ENCODE measurements at regions of chr7 and their contacts with region 1.

Region 1: DNA sequence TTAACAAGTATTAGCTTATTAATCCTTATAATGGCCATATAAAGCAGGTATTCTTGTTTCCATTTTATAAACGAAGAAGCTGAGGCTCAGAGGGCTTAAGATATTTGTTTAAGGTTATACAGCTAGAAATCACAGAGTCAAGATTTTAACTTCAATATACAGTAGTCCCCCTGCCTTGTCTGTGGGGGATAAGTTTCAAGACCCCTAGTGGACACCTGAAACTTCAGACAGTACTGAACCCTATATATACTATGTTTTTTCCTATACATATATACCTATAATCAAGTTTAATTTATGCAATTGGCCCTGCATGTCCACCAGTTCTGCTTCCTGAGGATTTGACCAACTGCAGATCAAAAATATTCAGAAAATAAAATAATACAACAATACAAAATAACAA is 44.4 kb upstream of the STRIP2 start:
- DNase-seq: no peak
- H3K4me3 ChIP-seq: no peak overlapping the region
- H3K27ac ChIP-seq: no peak overlapping the region
- H3K4me1 ChIP-seq: no peaks in the 10 kb centered on the region
- H3K27me3 ChIP-seq: no peaks in the 10 kb centered on the region
- CTCF ChIP-seq: no peak
- POLR2A ChIP-seq: no peak

Region 2: GRCh38 chr7:129017933-129018538 is 371.8 kb before region 1 on chr7:
- CTCF ChIA-PET with region 1: no interaction called
- POLR2A ChIA-PET with region 1: no interaction called
- dilution Hi-C with region 1: no loop called
- intact Hi-C with region 1: no loop called
- DNase-seq: no peak
- H3K4me3 ChIP-seq: no peak overlapping the region
- H3K27ac ChIP-seq: no peak overlapping the region
- H3K4me1 ChIP-seq: no peaks in the 10 kb centered on the region
- H3K27me3 ChIP-seq: no peaks in the 10 kb centered on the region
- CTCF ChIP-seq: no peak
- POLR2A ChIP-seq: no peak

Region 3: DNA sequence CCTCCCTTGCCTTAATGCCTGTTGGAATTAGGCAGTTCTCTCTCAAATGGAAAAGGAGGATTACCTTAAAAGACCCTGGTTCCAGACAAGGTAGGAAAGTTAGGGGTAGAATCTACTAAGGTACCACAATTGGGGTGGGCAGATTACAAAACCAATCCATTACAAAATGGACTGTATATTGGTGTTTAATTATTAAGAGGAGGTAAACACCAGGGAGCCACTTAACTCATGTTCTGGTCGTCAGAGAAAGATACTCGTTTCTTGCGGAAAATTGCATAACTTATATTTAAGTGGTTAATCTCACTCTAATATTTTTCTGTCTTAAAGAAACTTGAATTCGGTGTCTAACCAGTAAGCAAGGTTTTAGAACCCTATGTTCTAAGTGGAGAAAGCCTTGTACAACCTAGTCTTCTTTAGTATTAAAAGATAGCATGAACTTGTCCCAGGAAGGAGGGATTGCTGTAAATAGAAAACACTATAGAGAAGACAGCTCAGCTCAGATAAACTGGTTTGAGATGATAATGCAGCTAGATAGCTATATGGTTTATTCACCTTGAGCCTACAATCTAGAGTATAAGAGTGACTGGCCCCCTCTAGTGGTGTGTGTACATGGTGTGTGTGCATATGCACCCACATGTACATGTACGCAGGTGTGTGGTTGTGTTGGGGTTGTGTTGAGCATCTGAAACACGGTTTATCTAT is 13.6 kb before region 1 on chr7:
- CTCF ChIA-PET with region 1: interaction called, 46 read pairs
- POLR2A ChIA-PET with region 1: no interaction called
- dilution Hi-C with region 1: no loop called
- intact Hi-C with region 1: no loop called
- DNase-seq: peak; percentile 39
- H3K4me3 ChIP-seq: no peak overlapping the region
- H3K27ac ChIP-seq: no peak overlapping the region
- H3K4me1 ChIP-seq: peaks cover 10% of the 10 kb centered on the region
- H3K27me3 ChIP-seq: no peaks in the 10 kb centered on the region
- CTCF ChIP-seq: peak; percentile 38 to 57
- POLR2A ChIP-seq: no peak

Region 4: GRCh38 chr7:129401967-129402860 is 12.4 kb after region 1 on chr7:
- CTCF ChIA-PET with region 1: interaction called, 23 read pairs
- POLR2A ChIA-PET with region 1: no interaction called
- dilution Hi-C with region 1: no loop called
- intact Hi-C with region 1: no loop called
- DNase-seq: no peak
- H3K4me3 ChIP-seq: no peak overlapping the region
- H3K27ac ChIP-seq: no peak overlapping the region
- H3K4me1 ChIP-seq: peaks cover 9% of the 10 kb centered on the region
- H3K27me3 ChIP-seq: no peaks in the 10 kb centered on the region
- CTCF ChIP-seq: no peak
- POLR2A ChIP-seq: no peak

Region 5: GRCh38 chr7:129417071-129417470 is 27.2 kb after region 1 on chr7:
- CTCF ChIA-PET with region 1: no interaction called
- POLR2A ChIA-PET with region 1: no interaction called
- dilution Hi-C with region 1: no loop called
- intact Hi-C with region 1: no loop called
- DNase-seq: no peak
- H3K4me3 ChIP-seq: no peak overlapping the region
- H3K27ac ChIP-seq: no peak overlapping the region
- H3K4me1 ChIP-seq: no peaks in the 10 kb centered on the region
- H3K27me3 ChIP-seq: no peaks in the 10 kb centered on the region
- CTCF ChIP-seq: no peak
- POLR2A ChIP-seq: no peak

Measured in endothelial cell of umbilical vein (primary cell).